Activated CD4-positive, alpha-beta T cell treated with anti-CD3 and anti-CD28 coated beads for 36 hours (primary cell): ENCODE measurements at regions of chr19 and their contacts with region 1.

Region 1: GRCh38 chr19:21020298-21021227 is at the start of gene ZNF430:
- DNase-seq: peak; percentile 96
- ATAC-seq: peak; percentile 95
- H3K4me3 Mint-ChIP-seq: peak within 1 kb of the TSS; percentile 96
- H3K27ac Mint-ChIP-seq: peak within 1 kb of the TSS; percentile 99
- H3K4me1 Mint-ChIP-seq: peaks cover 40% of the 10 kb centered on the region
- H3K27me3 Mint-ChIP-seq: no peaks in the 10 kb centered on the region
- total RNA-seq, gene ZNF430: 14.7 to 17.1 TPM

Region 2: DNA sequence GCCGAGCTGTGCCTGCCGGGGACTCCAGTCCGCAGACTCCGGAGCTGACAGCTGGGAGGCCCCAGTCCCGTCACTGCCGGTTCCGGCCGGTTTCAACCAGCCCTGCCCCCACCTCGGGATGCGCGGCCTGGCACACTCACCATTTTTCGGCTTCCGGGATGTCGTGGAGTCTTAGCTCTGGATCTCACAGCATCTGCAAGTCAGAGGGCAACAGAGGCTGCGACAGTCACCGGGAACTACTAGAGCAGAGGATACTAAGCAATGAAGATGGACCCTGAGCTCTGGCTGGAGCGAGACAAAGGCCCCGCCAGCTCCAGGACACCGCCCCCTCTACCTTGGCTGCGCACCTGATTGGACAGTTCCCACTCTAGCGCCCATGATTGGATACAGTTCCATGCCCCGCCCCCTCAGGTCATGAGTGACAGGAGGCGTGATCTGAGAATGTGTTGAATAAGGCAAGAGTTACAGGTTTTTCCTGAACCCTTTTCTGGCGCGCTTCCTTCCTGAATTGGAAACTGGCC is 981.3 kb before region 1 on chr19 and contains the start of gene ZNF682:
- CTCF ChIA-PET with region 1: no interaction called
- POLR2A ChIA-PET with region 1: no interaction called
- intact Hi-C with region 1: loop called in 1 of 2 experiments (anchors 5 kb)
- DNase-seq: peak; percentile 98
- ATAC-seq: peak; percentile 100
- H3K4me3 Mint-ChIP-seq: peak within 1 kb of the TSS; percentile 94
- H3K27ac Mint-ChIP-seq: peak within 1 kb of the TSS; percentile 94
- H3K4me1 Mint-ChIP-seq: peaks cover 16% of the 10 kb centered on the region
- H3K27me3 Mint-ChIP-seq: peaks cover 5% of the 10 kb centered on the region
- total RNA-seq, gene ZNF682: 6.0 to 7.5 TPM

Region 3: GRCh38 chr19:20565321-20566018 is 455.1 kb before region 1 on chr19 and contains the start of gene ZNF737:
- CTCF ChIA-PET with region 1: interaction called, 3 read pairs
- POLR2A ChIA-PET with region 1: no interaction called
- intact Hi-C with region 1: loop called (anchors 2 to 10 kb)
- DNase-seq: peak; percentile 97
- ATAC-seq: peak; percentile 97
- H3K4me3 Mint-ChIP-seq: peak within 1 kb of the TSS; percentile 98
- H3K27ac Mint-ChIP-seq: peak within 1 kb of the TSS; percentile 98
- H3K4me1 Mint-ChIP-seq: peaks cover 19% of the 10 kb centered on the region
- H3K27me3 Mint-ChIP-seq: no peaks in the 10 kb centered on the region
- total RNA-seq, gene ZNF737: 13.9 to 16.4 TPM

Region 4: GRCh38 chr19:20923077-20923871 is 97.3 kb before region 1 on chr19 and contains the start of gene ZNF85:
- CTCF ChIA-PET with region 1: interaction called, 3 read pairs
- POLR2A ChIA-PET with region 1: interaction called, 6 read pairs
- intact Hi-C with region 1: loop called (anchors 1 to 2 kb)
- DNase-seq: peak; percentile 95
- ATAC-seq: peak; percentile 99
- H3K4me3 Mint-ChIP-seq: peak within 1 kb of the TSS; percentile 91
- H3K27ac Mint-ChIP-seq: peak within 1 kb of the TSS; percentile 96
- H3K4me1 Mint-ChIP-seq: peaks cover 25% of the 10 kb centered on the region
- H3K27me3 Mint-ChIP-seq: no peaks in the 10 kb centered on the region
- total RNA-seq, gene ZNF85: 23.2 to 29.3 TPM

Region 5: GRCh38 chr19:21109116-21109515 is 88.6 kb after region 1 on chr19:
- CTCF ChIA-PET with region 1: no interaction called
- POLR2A ChIA-PET with region 1: no interaction called
- intact Hi-C with region 1: no loop called
- DNase-seq: no peak
- ATAC-seq: no peak
- H3K4me3 Mint-ChIP-seq: no peak overlapping the region
- H3K27ac Mint-ChIP-seq: no peak overlapping the region
- H3K4me1 Mint-ChIP-seq: no peaks in the 10 kb centered on the region
- H3K27me3 Mint-ChIP-seq: no peaks in the 10 kb centered on the region

Region 6: GRCh38 chr19:21141787-21142464 is 121.4 kb after region 1 on chr19 and contains the start of gene ZNF431:
- CTCF ChIA-PET with region 1: no interaction called
- POLR2A ChIA-PET with region 1: interaction called, 3 read pairs
- intact Hi-C with region 1: loop called (anchors 1 to 2 kb)
- DNase-seq: peak; percentile 94
- ATAC-seq: peak; percentile 99
- H3K4me3 Mint-ChIP-seq: peak within 1 kb of the TSS; percentile 95
- H3K27ac Mint-ChIP-seq: peak within 1 kb of the TSS; percentile 96
- H3K4me1 Mint-ChIP-seq: peaks cover 38% of the 10 kb centered on the region
- H3K27me3 Mint-ChIP-seq: no peaks in the 10 kb centered on the region
- total RNA-seq, gene ZNF431: 16.8 to 22.2 TPM

Region 7: GRCh38 chr19:21474671-21475181 is 454.2 kb after region 1 on chr19:
- CTCF ChIA-PET with region 1: no interaction called
- POLR2A ChIA-PET with region 1: no interaction called
- intact Hi-C with region 1: loop called in 1 of 2 experiments (anchors 10 kb)
- DNase-seq: peak; percentile 93
- ATAC-seq: peak; percentile 100
- H3K4me3 Mint-ChIP-seq: peak overlapping the region; percentile 77
- H3K27ac Mint-ChIP-seq: peak overlapping the region; percentile 65
- H3K4me1 Mint-ChIP-seq: no peaks in the 10 kb centered on the region
- H3K27me3 Mint-ChIP-seq: no peaks in the 10 kb centered on the region